ENCODE measurements at regions of chr17 and their contacts with region 1.

Region 1: DNA sequence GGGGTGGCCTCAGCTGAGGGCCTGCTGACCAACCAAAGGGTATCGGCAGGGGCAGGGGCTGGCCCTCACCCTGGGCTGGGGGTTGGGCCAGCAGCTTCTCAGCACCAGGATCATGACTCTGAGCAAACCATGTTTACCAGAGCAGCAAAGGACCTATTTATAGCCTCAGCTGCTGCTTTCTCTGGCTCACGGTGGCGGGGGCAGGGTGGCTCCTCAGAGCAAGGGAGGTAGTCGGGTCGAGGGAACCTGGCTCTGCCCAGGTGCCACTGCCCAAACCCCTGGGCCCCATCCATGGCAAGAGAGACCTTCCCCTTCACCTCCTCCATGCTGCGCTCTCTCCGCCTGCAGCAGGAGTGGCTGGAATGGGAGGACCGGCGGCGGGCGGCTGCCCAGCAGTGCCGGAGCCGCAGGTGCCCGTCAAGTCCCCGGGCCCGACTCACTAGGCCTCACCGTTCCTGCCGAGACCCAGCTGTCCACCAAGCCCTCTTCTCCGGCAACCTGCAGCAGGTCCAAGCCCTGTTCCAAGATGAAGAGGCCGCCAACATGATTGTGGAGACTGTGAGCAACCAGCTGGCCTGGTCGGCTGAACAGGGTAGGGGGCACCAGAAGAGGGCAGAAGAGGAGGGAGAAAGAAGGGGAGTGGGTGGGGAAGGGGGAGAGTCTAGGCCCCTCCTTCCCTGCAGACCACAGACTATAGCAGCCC is at the start of gene ASB16:
- DNase-seq: no peak
- H3K4me3 Mint-ChIP-seq: no peak within 1 kb of the TSS
- H3K27ac Mint-ChIP-seq: no peak within 1 kb of the TSS
- H3K4me1 Mint-ChIP-seq: peaks cover 12% of the 10 kb centered on the region
- H3K27me3 Mint-ChIP-seq: no peaks in the 10 kb centered on the region
- CTCF ChIP-seq: no peak
- total RNA-seq, gene ASB16: 0.19 TPM in 1 of 2 replicates, not detected in the other

Region 2: DNA sequence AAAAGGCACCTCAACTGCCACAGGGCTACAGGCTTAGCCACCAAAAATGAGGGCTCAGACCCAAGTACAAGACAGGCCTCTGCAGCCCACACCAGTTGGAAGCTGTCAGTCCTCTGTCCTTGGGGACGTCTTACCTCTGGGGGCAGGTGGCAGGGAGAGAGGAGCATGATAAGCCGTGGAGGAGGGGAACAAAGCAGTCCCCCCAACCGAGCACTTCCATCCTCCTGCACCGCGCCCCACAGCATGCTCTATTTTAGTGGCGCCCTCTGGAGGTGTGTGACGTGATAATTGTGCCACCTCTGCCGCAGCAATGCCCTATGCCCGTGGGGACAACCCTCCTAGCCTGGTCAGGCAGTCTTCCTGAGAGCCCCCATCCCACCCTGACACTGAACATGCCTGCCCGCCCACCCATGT is 86.5 kb before region 1 on chr17:
- CTCF ChIA-PET with region 1: interaction called, 43 read pairs
- intact Hi-C with region 1: no loop called
- DNase-seq: peak; percentile 62
- H3K4me3 Mint-ChIP-seq: no peak overlapping the region
- H3K27ac Mint-ChIP-seq: no peak overlapping the region
- H3K4me1 Mint-ChIP-seq: peaks cover 13% of the 10 kb centered on the region
- H3K27me3 Mint-ChIP-seq: no peaks in the 10 kb centered on the region
- CTCF ChIP-seq: peak; percentile 77

Region 3: DNA sequence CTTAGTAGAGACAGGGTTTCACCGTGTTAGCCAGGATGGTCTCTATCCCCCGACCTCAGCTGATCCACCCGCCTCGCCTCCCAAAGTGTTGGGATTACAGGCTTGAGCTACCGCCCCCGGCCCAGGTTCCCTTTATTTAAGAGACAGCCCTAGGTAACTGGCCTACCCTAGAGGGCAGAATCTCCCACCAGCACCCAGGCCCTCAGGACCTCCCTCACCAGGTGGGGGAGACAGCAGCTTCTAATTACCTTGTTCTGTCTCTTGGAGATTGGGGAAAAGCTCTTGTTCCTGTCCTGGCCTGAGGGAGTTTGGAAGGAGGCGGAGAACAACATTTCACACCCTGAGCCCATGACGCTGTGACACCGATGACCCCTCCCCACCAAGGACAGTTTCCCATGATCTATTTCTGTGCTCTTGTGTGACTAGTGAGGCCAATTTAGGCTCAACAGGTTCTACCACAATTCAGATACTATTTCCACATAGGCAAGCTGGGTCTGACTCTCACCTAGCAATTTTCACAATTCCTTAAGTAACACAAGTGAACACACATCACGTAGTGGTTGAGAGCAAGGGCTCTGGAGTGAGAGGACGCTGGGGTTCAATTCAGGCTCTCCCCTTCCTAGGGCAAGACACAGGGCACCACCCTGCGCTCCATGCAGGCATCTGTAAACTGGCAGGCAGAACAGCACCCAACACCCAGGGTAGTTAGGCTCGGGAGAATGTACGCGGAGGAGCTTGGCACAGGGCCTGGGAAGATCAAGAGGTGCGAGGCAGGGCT is 67.6 kb before region 1 on chr17:
- CTCF ChIA-PET with region 1: interaction called, 13 read pairs
- intact Hi-C with region 1: no loop called
- DNase-seq: no peak
- H3K4me3 Mint-ChIP-seq: no peak overlapping the region
- H3K27ac Mint-ChIP-seq: peak overlapping the region; percentile 13
- H3K4me1 Mint-ChIP-seq: peaks cover 9% of the 10 kb centered on the region
- H3K27me3 Mint-ChIP-seq: no peaks in the 10 kb centered on the region
- CTCF ChIP-seq: no peak

Region 4: DNA sequence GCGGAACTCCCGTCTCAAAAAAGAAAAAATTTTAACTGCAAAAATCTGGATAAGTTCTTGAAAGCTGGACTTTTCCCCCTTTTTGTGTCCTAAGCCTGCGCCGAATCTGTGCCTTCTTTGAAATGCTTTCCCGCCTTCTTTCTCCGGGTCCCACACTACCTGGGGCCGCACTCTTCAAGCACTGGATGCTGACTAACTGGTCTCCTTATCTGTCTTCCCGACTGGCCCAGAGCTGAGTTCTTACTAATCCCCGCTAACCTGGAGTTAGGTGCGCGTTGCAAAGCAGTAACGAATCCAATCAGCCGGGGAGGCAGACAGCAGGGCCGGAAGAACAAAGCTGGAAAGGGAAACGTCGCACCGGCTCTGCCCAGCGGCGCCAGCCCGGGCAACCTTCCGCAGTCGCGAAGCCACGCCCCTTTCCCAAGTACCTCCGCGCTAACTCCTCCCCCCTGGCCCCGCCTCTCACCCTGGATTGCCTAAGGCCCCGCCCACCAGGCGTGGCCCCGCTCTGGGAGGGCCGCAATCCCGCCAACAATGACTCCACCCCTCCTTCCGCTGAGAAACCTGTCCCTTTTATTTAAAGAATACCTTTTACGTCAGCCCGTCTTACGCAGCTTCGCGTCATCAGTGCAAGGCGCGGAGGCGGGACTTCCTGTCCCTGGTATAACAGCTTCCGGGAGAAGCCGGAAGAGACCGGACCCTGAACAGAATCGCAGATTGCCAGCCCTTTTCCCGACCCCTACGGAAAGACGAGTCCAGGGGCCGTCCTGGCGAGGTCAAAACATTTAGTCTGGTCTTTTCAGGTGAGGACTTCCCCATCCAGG is 15.9 kb after region 1 on chr17 and contains the start of gene TMUB2:
- CTCF ChIA-PET with region 1: interaction called, 10 read pairs
- intact Hi-C with region 1: no loop called
- DNase-seq: peak; percentile 100
- H3K4me3 Mint-ChIP-seq: peak within 1 kb of the TSS; percentile 89
- H3K27ac Mint-ChIP-seq: peak within 1 kb of the TSS; percentile 93
- H3K4me1 Mint-ChIP-seq: peaks cover 21% of the 10 kb centered on the region
- H3K27me3 Mint-ChIP-seq: no peaks in the 10 kb centered on the region
- CTCF ChIP-seq: no peak
- total RNA-seq, gene TMUB2: 56.0 and 58.8 TPM in 2 replicates

Region 5: DNA sequence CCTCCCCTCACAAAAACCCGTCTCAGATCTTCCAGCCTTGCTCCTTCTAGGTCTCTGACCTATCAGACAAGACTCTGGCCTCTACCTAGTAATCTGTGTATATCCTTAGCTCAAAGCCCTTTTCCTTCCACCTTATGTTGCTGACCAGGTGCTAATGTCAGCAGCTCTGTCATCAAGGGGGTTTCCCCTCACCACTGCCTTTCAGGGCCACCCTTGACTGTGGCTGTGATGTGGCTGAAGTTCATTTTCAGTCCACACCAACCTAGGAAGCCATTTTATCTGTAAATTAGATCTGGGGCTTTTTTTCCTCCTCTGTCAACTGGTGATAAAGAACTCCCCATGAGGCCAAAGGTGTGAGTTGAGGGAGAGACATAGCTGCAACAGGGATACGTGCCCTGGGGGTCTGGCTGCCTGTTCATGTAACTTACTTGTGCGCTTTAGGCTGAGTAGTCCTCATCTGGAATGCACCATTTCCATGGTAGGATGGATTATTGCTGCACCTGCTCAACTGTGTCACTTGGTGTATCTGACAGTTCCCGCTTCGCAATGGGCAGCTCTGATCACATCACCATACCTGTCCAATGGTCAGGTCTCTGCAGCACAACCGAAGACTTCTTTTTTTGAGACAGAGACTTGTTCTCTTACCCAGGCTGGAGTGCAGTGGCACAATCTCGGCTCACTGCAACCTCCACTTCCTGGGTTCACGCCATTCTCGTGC is 123.0 kb after region 1 on chr17:
- CTCF ChIA-PET with region 1: no interaction called
- intact Hi-C with region 1: no loop called
- DNase-seq: no peak
- H3K4me3 Mint-ChIP-seq: no peak overlapping the region
- H3K27ac Mint-ChIP-seq: no peak overlapping the region
- H3K4me1 Mint-ChIP-seq: no peaks in the 10 kb centered on the region
- H3K27me3 Mint-ChIP-seq: peaks cover 68% of the 10 kb centered on the region
- CTCF ChIP-seq: no peak

Region 6: DNA sequence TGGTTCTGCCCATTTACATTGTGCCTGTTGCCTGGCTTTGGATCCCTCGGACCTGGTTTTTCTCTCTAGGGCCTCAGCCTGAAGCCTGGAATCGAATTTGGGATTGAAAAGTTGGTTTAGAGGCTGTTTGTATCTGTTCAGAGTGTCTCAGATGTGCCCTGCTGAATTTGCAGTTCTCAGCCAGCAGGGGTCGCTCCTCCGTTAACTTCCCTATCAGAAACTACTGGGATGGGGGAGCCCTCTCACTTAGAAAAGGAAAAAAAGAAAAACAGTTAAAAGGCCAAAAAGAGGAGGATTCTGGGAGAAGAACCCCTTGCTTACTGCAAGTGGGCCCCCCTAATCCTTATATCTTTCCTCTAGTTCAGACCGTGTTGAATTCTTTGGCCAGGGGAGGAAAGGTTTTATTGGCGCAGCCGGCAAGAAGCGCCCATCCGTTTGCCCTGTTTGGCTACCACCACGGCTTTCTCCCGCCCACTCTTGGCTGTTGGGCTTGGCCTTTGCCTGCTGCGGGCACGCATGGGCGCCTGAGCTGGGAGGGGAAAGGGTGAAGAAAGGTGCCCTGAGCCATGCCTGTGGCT is 395.3 kb after region 1 on chr17:
- CTCF ChIA-PET with region 1: interaction called, 10 read pairs
- intact Hi-C with region 1: no loop called
- DNase-seq: no peak
- H3K4me3 Mint-ChIP-seq: no peak overlapping the region
- H3K27ac Mint-ChIP-seq: no peak overlapping the region
- H3K4me1 Mint-ChIP-seq: peaks cover 6% of the 10 kb centered on the region
- H3K27me3 Mint-ChIP-seq: no peaks in the 10 kb centered on the region
- CTCF ChIP-seq: peak; percentile 60

Region 7: DNA sequence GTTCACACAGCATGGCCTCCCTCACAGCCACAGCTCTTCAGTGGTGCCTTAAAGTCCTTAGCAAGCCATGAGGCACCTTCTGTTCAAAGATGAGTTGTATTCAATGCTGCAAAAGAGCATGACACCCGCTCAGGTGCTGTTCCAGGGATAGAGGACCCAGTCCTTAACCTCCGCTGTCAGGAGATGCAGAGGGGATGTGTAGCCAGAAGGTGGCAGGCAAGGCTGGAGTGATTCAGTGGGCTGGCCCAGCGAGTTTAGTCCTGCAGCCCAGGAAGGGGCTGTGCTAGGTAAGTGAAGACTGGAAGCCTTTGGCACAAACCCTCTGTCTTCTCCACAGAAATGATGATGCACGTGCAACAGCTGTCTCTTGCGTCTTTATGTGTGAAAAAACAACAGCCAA is 563.1 kb after region 1 on chr17:
- CTCF ChIA-PET with region 1: no interaction called
- intact Hi-C with region 1: no loop called
- DNase-seq: peak; percentile 45
- H3K4me3 Mint-ChIP-seq: no peak overlapping the region
- H3K27ac Mint-ChIP-seq: no peak overlapping the region
- H3K4me1 Mint-ChIP-seq: no peaks in the 10 kb centered on the region
- H3K27me3 Mint-ChIP-seq: no peaks in the 10 kb centered on the region
- CTCF ChIP-seq: no peak

Measured in Calu3 (cell line).